ENCODE measurements at regions of chr6 and their contacts with region 1.

Region 1: GRCh38 chr6:24919004-24919892 is 16.5 kb downstream of the RIPOR2 start:
- DNase-seq: no peak
- H3K4me3 ChIP-seq: peak overlapping the region in 1 of 2 donors; percentile 29
- H3K4me3 Mint-ChIP-seq: peak overlapping the region; percentile 67 to 88 (median 85)
- H3K27ac ChIP-seq: peak overlapping the region; percentile 45
- H3K27ac Mint-ChIP-seq: peak overlapping the region; percentile 81 to 95 (median 89)
- H3K4me1 ChIP-seq: peaks cover 98% of the 10 kb centered on the region
- H3K4me1 Mint-ChIP-seq: peaks cover 72 to 97% (median 86%) of the 10 kb centered on the region in 4 donors
- H3K27me3 ChIP-seq: no peaks in the 10 kb centered on the region
- H3K27me3 Mint-ChIP-seq: no peaks in the 10 kb centered on the region

Region 2: GRCh38 chr6:24855395-24856245 is 63.6 kb before region 1 on chr6:
- CTCF ChIA-PET with region 1: interaction called, 5 read pairs
- POLR2A ChIA-PET with region 1: interaction called, 14 read pairs
- intact Hi-C with region 1: no loop called
- DNase-seq: peak; percentile 76 to 82 (median 77)
- H3K4me3 ChIP-seq: no peak overlapping the region
- H3K4me3 Mint-ChIP-seq: peak overlapping the region in 5 of 8 donors; percentile 1 to 87 (median 26)
- H3K27ac ChIP-seq: peak overlapping the region; percentile 61
- H3K27ac Mint-ChIP-seq: peak overlapping the region; percentile 82 to 92 (median 90)
- H3K4me1 ChIP-seq: peaks cover 53% of the 10 kb centered on the region
- H3K4me1 Mint-ChIP-seq: peaks cover 48 to 58% (median 50%) of the 10 kb centered on the region in 4 donors
- H3K27me3 ChIP-seq: no peaks in the 10 kb centered on the region
- H3K27me3 Mint-ChIP-seq: no peaks in the 10 kb centered on the region

Region 3: GRCh38 chr6:24974182-24975171 is 55.2 kb after region 1 on chr6:
- CTCF ChIA-PET with region 1: no interaction called
- POLR2A ChIA-PET with region 1: interaction called, 1,351 read pairs
- intact Hi-C with region 1: no loop called
- DNase-seq: peak; percentile 46 to 73 (median 55)
- H3K4me3 ChIP-seq: peak overlapping the region in 1 of 2 donors; percentile 7
- H3K4me3 Mint-ChIP-seq: peak overlapping the region; percentile 66 to 78 (median 71)
- H3K27ac ChIP-seq: peak overlapping the region; percentile 49
- H3K27ac Mint-ChIP-seq: peak overlapping the region; percentile 91 to 97 (median 94)
- H3K4me1 ChIP-seq: peaks cover 67% of the 10 kb centered on the region
- H3K4me1 Mint-ChIP-seq: peaks cover 49 to 85% (median 72%) of the 10 kb centered on the region in 4 donors
- H3K27me3 ChIP-seq: no peaks in the 10 kb centered on the region
- H3K27me3 Mint-ChIP-seq: no peaks in the 10 kb centered on the region

Measured in CD4-positive, alpha-beta memory T cell (primary cell).